Activated B cell treated with CpG ODN at 0.5 μM for 24 hours (primary cell): ENCODE measurements at regions of chr3 and their contacts with region 1.

Region 1: GRCh38 chr3:57169872-57170623 is 4.9 kb upstream of the IL17RD start:
- DNase-seq: peak; percentile 67
- ATAC-seq: peak; percentile 66
- H3K4me3 Mint-ChIP-seq: peak overlapping the region; percentile 74
- H3K27ac Mint-ChIP-seq: no peak overlapping the region
- H3K4me1 Mint-ChIP-seq: peaks cover 11% of the 10 kb centered on the region
- H3K27me3 Mint-ChIP-seq: peaks cover 28% of the 10 kb centered on the region
- CTCF ChIP-seq: peak; percentile 81

Region 2: GRCh38 chr3:56915966-56916586 is 254.0 kb before region 1 on chr3:
- CTCF ChIA-PET with region 1: no interaction called
- POLR2A ChIA-PET with region 1: no interaction called
- intact Hi-C with region 1: no loop called
- DNase-seq: peak; percentile 33
- ATAC-seq: peak; percentile 69
- H3K4me3 Mint-ChIP-seq: peak overlapping the region; percentile 84
- H3K27ac Mint-ChIP-seq: peak overlapping the region; percentile 95
- H3K4me1 Mint-ChIP-seq: peaks cover 61% of the 10 kb centered on the region
- H3K27me3 Mint-ChIP-seq: no peaks in the 10 kb centered on the region
- CTCF ChIP-seq: no peak

Region 3: DNA sequence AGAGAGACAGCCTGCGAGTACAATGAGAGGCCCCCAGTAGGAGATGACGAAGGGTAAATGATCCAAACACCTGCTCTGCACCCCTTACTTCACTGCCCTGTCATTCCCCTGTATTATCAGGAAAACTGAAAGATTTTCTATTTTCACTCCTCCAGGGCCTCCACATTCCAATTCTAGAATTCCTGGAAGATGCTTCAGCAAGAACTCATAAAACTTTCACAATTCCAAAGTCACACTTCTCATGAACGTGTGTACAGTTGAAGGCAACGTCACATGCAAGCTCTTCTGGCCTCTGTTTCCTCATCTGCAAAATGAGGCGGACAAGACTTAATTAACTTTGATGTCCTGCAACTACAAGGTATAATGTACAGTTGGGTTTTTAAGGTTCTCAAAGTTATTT is 172.4 kb before region 1 on chr3:
- CTCF ChIA-PET with region 1: interaction called, 3 read pairs
- POLR2A ChIA-PET with region 1: no interaction called
- intact Hi-C with region 1: loop called (anchors 10 kb)
- DNase-seq: no peak
- ATAC-seq: no peak
- H3K4me3 Mint-ChIP-seq: no peak overlapping the region
- H3K27ac Mint-ChIP-seq: no peak overlapping the region
- H3K4me1 Mint-ChIP-seq: peaks cover 6% of the 10 kb centered on the region
- H3K27me3 Mint-ChIP-seq: peaks cover 3% of the 10 kb centered on the region
- CTCF ChIP-seq: no peak

Region 4: GRCh38 chr3:57354768-57355167 is 184.7 kb after region 1 on chr3:
- CTCF ChIA-PET with region 1: no interaction called
- POLR2A ChIA-PET with region 1: no interaction called
- intact Hi-C with region 1: no loop called
- DNase-seq: no peak
- ATAC-seq: peak; percentile 42
- H3K4me3 Mint-ChIP-seq: no peak overlapping the region
- H3K27ac Mint-ChIP-seq: no peak overlapping the region
- H3K4me1 Mint-ChIP-seq: peaks cover 19% of the 10 kb centered on the region
- H3K27me3 Mint-ChIP-seq: no peaks in the 10 kb centered on the region
- CTCF ChIP-seq: no peak

Region 5: GRCh38 chr3:57397175-57398026 is 227.4 kb after region 1 on chr3:
- CTCF ChIA-PET with region 1: interaction called, 3 read pairs
- POLR2A ChIA-PET with region 1: no interaction called
- intact Hi-C with region 1: loop called (anchors 1 kb)
- DNase-seq: peak; percentile 17
- ATAC-seq: peak; percentile 98
- H3K4me3 Mint-ChIP-seq: no peak overlapping the region
- H3K27ac Mint-ChIP-seq: peak overlapping the region; percentile 43
- H3K4me1 Mint-ChIP-seq: peaks cover 16% of the 10 kb centered on the region
- H3K27me3 Mint-ChIP-seq: peaks cover 3% of the 10 kb centered on the region
- CTCF ChIP-seq: peak; percentile 79

Region 6: GRCh38 chr3:57434041-57434440 is 264.0 kb after region 1 on chr3:
- CTCF ChIA-PET with region 1: no interaction called
- POLR2A ChIA-PET with region 1: no interaction called
- intact Hi-C with region 1: loop called (anchors 2 kb)
- DNase-seq: no peak
- ATAC-seq: no peak
- H3K4me3 Mint-ChIP-seq: no peak overlapping the region
- H3K27ac Mint-ChIP-seq: no peak overlapping the region
- H3K4me1 Mint-ChIP-seq: no peaks in the 10 kb centered on the region
- H3K27me3 Mint-ChIP-seq: peaks cover 12% of the 10 kb centered on the region
- CTCF ChIP-seq: no peak

Region 7: DNA sequence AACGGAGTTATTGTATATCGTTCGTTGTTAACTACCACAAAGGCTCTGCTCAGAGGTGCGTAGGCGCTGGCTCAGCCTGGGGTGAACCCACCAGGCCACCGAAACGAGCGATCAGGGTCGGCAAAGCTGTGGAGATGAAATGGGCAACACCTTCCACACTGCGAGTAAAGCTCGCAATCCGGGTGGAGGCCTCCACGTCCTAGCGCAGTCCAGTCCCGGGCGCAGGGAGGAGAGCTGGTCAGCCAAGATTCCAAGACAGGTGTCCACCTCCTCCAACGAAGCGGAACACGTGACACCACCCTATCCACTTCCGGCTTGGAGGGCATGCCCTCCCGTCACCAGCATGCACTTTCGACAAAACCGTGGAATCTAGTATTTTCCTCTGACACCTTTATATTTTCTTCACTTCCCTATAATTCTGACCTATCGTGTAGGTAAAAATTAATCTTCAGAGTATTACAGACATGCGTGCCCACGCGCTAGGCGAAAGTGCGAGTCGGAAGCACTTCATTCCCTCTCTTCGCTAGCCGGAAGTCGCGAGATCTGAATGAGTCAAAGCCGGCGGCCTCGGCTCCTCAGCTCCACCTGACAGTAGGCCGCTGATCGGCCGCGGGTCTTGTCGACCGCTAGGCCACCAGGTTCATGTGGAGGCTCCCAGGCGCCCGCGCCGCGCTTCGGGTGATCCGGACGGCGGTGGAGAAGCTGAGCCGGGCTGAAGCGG is 385.9 kb after region 1 on chr3 and contains the start of gene PDE12:
- CTCF ChIA-PET with region 1: no interaction called
- POLR2A ChIA-PET with region 1: no interaction called
- intact Hi-C with region 1: loop called (anchors 2 kb)
- DNase-seq: peak; percentile 77
- ATAC-seq: peak; percentile 79
- H3K4me3 Mint-ChIP-seq: peak within 1 kb of the TSS; percentile 87
- H3K27ac Mint-ChIP-seq: peak within 1 kb of the TSS; percentile 99
- H3K4me1 Mint-ChIP-seq: peaks cover 41% of the 10 kb centered on the region
- H3K27me3 Mint-ChIP-seq: no peaks in the 10 kb centered on the region
- CTCF ChIP-seq: no peak
- total RNA-seq, gene PDE12: 23.7 and 24.8 TPM in 2 replicates

Region 8: DNA sequence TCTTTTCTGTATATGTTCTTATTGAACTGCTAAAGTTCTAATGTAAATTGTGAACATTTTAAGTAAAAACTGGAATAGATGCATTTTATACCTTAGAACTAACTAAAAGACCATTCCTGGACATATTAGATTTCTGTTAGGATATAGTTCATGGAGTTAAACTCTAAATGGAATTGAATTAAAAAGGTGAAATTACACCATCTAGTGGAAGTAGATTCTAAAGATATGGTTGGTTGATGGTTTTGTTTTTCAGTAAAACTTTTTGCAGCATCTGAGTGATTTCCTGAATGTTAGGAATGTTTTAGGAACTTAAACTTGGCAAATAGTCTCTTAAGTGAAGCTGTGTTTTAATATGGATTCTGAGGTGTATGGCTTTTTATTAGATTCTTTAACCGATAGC is 682.8 kb after region 1 on chr3:
- CTCF ChIA-PET with region 1: no interaction called
- POLR2A ChIA-PET with region 1: no interaction called
- intact Hi-C with region 1: loop called (anchors 2 kb)
- DNase-seq: no peak
- ATAC-seq: no peak
- H3K4me3 Mint-ChIP-seq: no peak overlapping the region
- H3K27ac Mint-ChIP-seq: no peak overlapping the region
- H3K4me1 Mint-ChIP-seq: no peaks in the 10 kb centered on the region
- H3K27me3 Mint-ChIP-seq: no peaks in the 10 kb centered on the region
- CTCF ChIP-seq: no peak

Region 9: DNA sequence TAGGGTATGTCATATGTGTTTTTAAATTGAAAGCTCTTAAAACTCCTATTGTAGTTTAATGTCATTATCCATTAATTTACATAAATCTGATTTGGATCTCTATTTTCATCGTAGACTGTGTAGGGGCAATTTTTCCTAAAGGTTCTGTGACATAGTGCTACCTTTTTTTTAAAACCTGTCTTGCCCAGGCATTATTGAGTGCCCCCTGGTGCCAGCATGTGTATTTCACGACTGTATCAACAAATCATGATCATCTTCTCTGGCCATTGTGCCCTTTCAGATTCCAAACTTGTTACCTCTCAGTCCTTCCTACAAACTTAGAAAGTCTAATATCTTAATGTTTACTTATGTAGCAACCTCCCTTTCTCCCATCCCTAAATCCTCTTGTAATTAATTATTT is 740.9 kb after region 1 on chr3:
- CTCF ChIA-PET with region 1: interaction called, 4 read pairs
- POLR2A ChIA-PET with region 1: no interaction called
- intact Hi-C with region 1: loop called (anchors 1 kb)
- DNase-seq: no peak
- ATAC-seq: no peak
- H3K4me3 Mint-ChIP-seq: no peak overlapping the region
- H3K27ac Mint-ChIP-seq: no peak overlapping the region
- H3K4me1 Mint-ChIP-seq: no peaks in the 10 kb centered on the region
- H3K27me3 Mint-ChIP-seq: no peaks in the 10 kb centered on the region
- CTCF ChIP-seq: no peak